Tibial artery (tissue), 4 donors: ENCODE measurements at regions of chr16 and their contacts with region 1.

Region 1: DNA sequence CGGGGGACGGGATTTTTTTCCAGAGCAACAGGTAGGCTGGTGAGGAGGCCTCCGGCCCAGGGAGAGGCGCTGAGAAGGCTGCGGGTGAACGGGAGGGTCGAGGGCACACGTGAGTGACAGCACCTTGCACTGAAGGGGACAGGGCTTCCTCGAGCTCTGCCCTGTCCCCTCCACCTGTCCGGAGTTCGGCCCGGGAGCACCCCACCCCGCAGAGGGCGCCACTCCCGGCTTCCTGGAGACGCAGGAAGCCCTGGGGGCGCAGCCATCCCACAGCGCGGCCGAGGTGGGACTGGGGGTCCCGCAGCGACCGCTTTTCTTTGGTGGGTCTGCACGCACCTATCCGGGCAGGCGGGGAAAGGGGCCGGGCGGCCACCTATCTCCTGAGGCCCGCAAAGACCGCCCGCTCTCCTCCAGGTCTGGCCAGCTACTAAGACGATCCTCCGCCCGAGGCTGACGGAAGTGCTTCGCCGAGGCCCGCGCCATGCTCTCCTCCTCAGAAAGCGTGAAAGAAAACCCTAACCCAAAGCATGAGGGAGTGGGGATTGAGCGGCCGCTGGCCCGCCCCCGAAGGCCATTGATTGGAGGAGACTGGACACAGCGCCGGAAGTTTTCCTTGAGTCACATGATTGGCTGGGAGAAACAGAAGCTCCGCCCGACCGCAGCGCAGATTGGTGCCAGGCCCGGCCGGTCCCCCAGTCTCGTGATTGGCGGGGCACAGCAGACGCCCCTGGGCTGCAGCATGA is 34.3 kb downstream of the DDX19A start:
- DNase-seq: peak; percentile 97 to 98
- H3K4me3 ChIP-seq: peak overlapping the region; percentile 57 to 67
- H3K27ac ChIP-seq: peak overlapping the region; percentile 66 to 83
- H3K4me1 ChIP-seq: peaks cover 0 to 14% (median 10%) of the 10 kb centered on the region in 4 donors
- H3K27me3 ChIP-seq: no peaks in the 10 kb centered on the region
- CTCF ChIP-seq: no peak

Region 2: GRCh38 chr16:70320121-70320520 is 60.9 kb before region 1 on chr16:
- intact Hi-C with region 1: no loop called
- DNase-seq: no peak
- H3K4me3 ChIP-seq: no peak overlapping the region
- H3K27ac ChIP-seq: no peak overlapping the region
- H3K4me1 ChIP-seq: no peaks in the 10 kb centered on the region
- H3K27me3 ChIP-seq: no peaks in the 10 kb centered on the region
- CTCF ChIP-seq: no peak

Region 3: DNA sequence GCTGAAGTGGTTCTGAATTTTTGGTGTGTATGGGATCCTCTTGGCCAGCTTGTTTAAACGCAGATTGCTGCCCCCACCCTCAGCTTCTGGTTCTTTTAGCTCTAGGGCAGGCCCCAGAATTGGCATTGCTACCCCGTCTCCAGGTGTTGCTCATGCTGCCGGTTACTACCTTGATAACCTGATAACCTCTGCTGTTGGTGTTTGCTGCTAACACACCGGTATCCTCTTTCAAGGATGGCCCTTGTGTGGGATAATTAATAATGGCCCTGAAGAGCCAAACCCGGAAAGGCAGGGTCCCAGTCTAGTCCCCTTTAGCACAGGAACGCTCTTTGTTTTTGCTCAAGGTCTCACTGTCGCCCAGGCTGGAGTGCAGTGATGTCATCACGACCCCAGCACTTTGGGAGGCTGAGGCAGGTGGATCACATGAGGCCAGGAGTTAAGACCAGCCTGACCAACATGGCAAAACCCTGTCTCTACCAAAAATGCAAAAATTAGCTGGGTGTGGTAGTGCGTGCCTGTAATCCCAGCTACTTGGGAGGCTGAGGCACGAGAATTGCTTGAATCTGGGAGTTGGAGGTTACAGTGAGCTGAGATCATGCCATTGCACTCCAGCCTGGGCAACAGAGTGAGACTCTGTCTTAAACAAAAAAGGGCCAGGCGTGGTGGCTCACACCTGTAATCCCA is 59.1 kb after region 1 on chr16:
- intact Hi-C with region 1: loop called (anchors 2 kb)
- DNase-seq: no peak
- H3K4me3 ChIP-seq: no peak overlapping the region
- H3K27ac ChIP-seq: no peak overlapping the region
- H3K4me1 ChIP-seq: peaks cover 0 to 26% (median 22%) of the 10 kb centered on the region in 4 donors
- H3K27me3 ChIP-seq: no peaks in the 10 kb centered on the region
- CTCF ChIP-seq: no peak

Region 4: GRCh38 chr16:70454222-70455034 is 73.4 kb after region 1 on chr16 and contains the start of gene FCSK:
- intact Hi-C with region 1: loop called (anchors 5 kb)
- DNase-seq: peak in 1 of 2 donors; percentile 75
- H3K4me3 ChIP-seq: peak within 1 kb of the TSS; percentile 91 to 92
- H3K27ac ChIP-seq: peak within 1 kb of the TSS; percentile 83 to 96
- H3K4me1 ChIP-seq: peaks cover 0 to 20% (median 14%) of the 10 kb centered on the region in 4 donors
- H3K27me3 ChIP-seq: peaks cover 0 to 10% of the 10 kb centered on the region in 2 donors
- CTCF ChIP-seq: peak in 1 of 2 experiments; percentile 17